CD8-positive, alpha-beta T cell (primary cell): ENCODE measurements at regions of chr7 and their contacts with region 1.

Region 1: GRCh38 chr7:152336754-152337368 is 98.9 kb downstream of the KMT2C start:
- DNase-seq: peak in 5 of 9 experiments; percentile 4 to 66 (median 17)
- ATAC-seq: peak; percentile 65
- H3K4me3 ChIP-seq: no peak overlapping the region
- H3K4me3 Mint-ChIP-seq: peak overlapping the region; percentile 78
- H3K27ac ChIP-seq: peak overlapping the region in 1 of 2 experiments; percentile 64
- H3K27ac Mint-ChIP-seq: no peak overlapping the region
- H3K4me1 ChIP-seq: peaks cover 25% of the 10 kb centered on the region
- H3K4me1 Mint-ChIP-seq: peaks cover 66% of the 10 kb centered on the region
- H3K27me3 ChIP-seq: no peaks in the 10 kb centered on the region
- H3K27me3 Mint-ChIP-seq: no peaks in the 10 kb centered on the region
- CTCF ChIP-seq: peak; percentile 61

Region 2: DNA sequence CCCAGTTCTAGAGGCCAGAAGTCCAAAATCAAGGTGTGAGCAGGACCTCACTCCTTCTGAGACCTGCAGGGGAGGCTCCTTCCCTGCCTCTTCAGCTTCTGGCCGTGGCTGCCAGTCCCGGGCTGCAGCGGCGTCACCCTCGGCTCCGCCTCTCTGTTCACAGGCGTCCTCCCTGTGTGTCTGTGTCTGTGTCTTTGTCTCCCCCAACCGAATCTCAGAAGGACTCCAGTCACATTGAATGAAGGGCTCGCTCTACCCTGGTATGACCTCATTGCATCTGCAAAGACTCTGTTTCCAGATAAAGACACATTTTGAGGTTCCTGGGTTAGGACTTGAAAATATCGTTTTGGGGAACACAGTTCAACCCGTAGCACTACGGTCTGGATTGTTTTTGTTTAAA is 344.5 kb before region 1 on chr7:
- CTCF ChIA-PET with region 1: no interaction called
- POLR2A ChIA-PET with region 1: no interaction called
- intact Hi-C with region 1: no loop called
- DNase-seq: peak; percentile 12 to 75 (median 58)
- ATAC-seq: peak; percentile 97
- H3K4me3 ChIP-seq: no peak overlapping the region
- H3K4me3 Mint-ChIP-seq: no peak overlapping the region
- H3K27ac ChIP-seq: no peak overlapping the region
- H3K27ac Mint-ChIP-seq: peak overlapping the region; percentile 58
- H3K4me1 ChIP-seq: no peaks in the 10 kb centered on the region
- H3K4me1 Mint-ChIP-seq: peaks cover 7% of the 10 kb centered on the region
- H3K27me3 ChIP-seq: no peaks in the 10 kb centered on the region
- H3K27me3 Mint-ChIP-seq: peaks cover 28% of the 10 kb centered on the region
- CTCF ChIP-seq: peak; percentile 34

Region 3: GRCh38 chr7:152430854-152431253 is 94.0 kb after region 1 on chr7:
- CTCF ChIA-PET with region 1: no interaction called
- POLR2A ChIA-PET with region 1: interaction called, 3 read pairs
- intact Hi-C with region 1: loop called (anchors 5 kb)
- DNase-seq: no peak
- ATAC-seq: no peak
- H3K4me3 ChIP-seq: no peak overlapping the region
- H3K4me3 Mint-ChIP-seq: no peak overlapping the region
- H3K27ac ChIP-seq: no peak overlapping the region
- H3K27ac Mint-ChIP-seq: no peak overlapping the region
- H3K4me1 ChIP-seq: peaks cover 44% of the 10 kb centered on the region
- H3K4me1 Mint-ChIP-seq: peaks cover 64% of the 10 kb centered on the region
- H3K27me3 ChIP-seq: no peaks in the 10 kb centered on the region
- H3K27me3 Mint-ChIP-seq: no peaks in the 10 kb centered on the region
- CTCF ChIP-seq: no peak

Region 4: GRCh38 chr7:152442333-152442835 is 105.5 kb after region 1 on chr7:
- CTCF ChIA-PET with region 1: no interaction called
- POLR2A ChIA-PET with region 1: no interaction called
- intact Hi-C with region 1: no loop called
- DNase-seq: no peak
- ATAC-seq: no peak
- H3K4me3 ChIP-seq: no peak overlapping the region
- H3K4me3 Mint-ChIP-seq: no peak overlapping the region
- H3K27ac ChIP-seq: no peak overlapping the region
- H3K27ac Mint-ChIP-seq: no peak overlapping the region
- H3K4me1 ChIP-seq: no peaks in the 10 kb centered on the region
- H3K4me1 Mint-ChIP-seq: peaks cover under 1% of the 10 kb centered on the region
- H3K27me3 ChIP-seq: no peaks in the 10 kb centered on the region
- H3K27me3 Mint-ChIP-seq: no peaks in the 10 kb centered on the region
- CTCF ChIP-seq: no peak

Region 5: GRCh38 chr7:152553671-152554317 is 216.9 kb after region 1 on chr7:
- CTCF ChIA-PET with region 1: interaction called, 3 read pairs
- POLR2A ChIA-PET with region 1: no interaction called
- intact Hi-C with region 1: loop called in 1 of 2 experiments (anchors 10 kb)
- DNase-seq: no peak
- ATAC-seq: no peak
- H3K4me3 ChIP-seq: no peak overlapping the region
- H3K4me3 Mint-ChIP-seq: no peak overlapping the region
- H3K27ac ChIP-seq: no peak overlapping the region
- H3K27ac Mint-ChIP-seq: no peak overlapping the region
- H3K4me1 ChIP-seq: no peaks in the 10 kb centered on the region
- H3K4me1 Mint-ChIP-seq: no peaks in the 10 kb centered on the region
- H3K27me3 ChIP-seq: no peaks in the 10 kb centered on the region
- H3K27me3 Mint-ChIP-seq: no peaks in the 10 kb centered on the region
- CTCF ChIP-seq: no peak

Region 6: GRCh38 chr7:152675759-152676636 is 339.1 kb after region 1 on chr7 and contains the start of gene XRCC2:
- CTCF ChIA-PET with region 1: interaction called, 4 read pairs
- POLR2A ChIA-PET with region 1: no interaction called
- intact Hi-C with region 1: loop called in 1 of 2 experiments (anchors 10 kb)
- DNase-seq: peak; percentile 88 to 99 (median 96)
- ATAC-seq: peak; percentile 94
- H3K4me3 ChIP-seq: peak within 1 kb of the TSS; percentile 65 to 89
- H3K4me3 Mint-ChIP-seq: peak within 1 kb of the TSS; percentile 96
- H3K27ac ChIP-seq: peak within 1 kb of the TSS; percentile 79 to 87
- H3K27ac Mint-ChIP-seq: peak within 1 kb of the TSS; percentile 83
- H3K4me1 ChIP-seq: peaks cover 8% of the 10 kb centered on the region
- H3K4me1 Mint-ChIP-seq: peaks cover 11% of the 10 kb centered on the region
- H3K27me3 ChIP-seq: no peaks in the 10 kb centered on the region
- H3K27me3 Mint-ChIP-seq: no peaks in the 10 kb centered on the region
- CTCF ChIP-seq: no peak
- total RNA-seq, gene XRCC2: 0.17 to 0.30 TPM